Ascending aorta (tissue), 2 donors: ENCODE measurements at regions of chr2 and their contacts with region 1.

Region 1: GRCh38 chr2:191051825-191052778 is 38.1 kb upstream of the STAT1 start:
- DNase-seq: no peak
- H3K4me3 ChIP-seq: no peak overlapping the region
- H3K27ac ChIP-seq: no peak overlapping the region
- H3K4me1 ChIP-seq: peaks cover 0 to 3% of the 10 kb centered on the region in 2 donors
- H3K27me3 ChIP-seq: no peaks in the 10 kb centered on the region
- CTCF ChIP-seq: peak; percentile 44 to 62 (median 60)

Region 2: DNA sequence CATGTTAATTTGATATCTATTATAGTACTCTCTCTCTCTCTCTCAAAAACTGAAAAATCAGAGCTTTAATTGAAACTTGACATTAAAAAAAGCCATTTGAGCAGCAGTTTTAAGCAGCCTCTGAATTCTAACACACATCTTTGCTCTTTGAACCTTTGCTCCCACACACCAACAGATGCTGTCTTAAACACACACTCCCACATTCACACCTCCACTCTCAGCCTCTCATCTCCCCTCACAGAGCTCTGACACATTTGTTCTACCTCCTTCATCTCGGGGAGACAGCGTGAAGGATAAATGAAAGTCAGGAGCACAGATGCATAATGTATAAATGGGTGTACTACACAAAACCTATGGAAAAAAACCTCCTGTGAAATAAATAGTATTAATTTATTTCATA is 308.1 kb before region 1 on chr2:
- intact Hi-C with region 1: no loop called
- DNase-seq: no peak
- H3K4me3 ChIP-seq: no peak overlapping the region
- H3K27ac ChIP-seq: no peak overlapping the region
- H3K4me1 ChIP-seq: no peaks in the 10 kb centered on the region
- H3K27me3 ChIP-seq: no peaks in the 10 kb centered on the region
- CTCF ChIP-seq: no peak

Region 3: GRCh38 chr2:190804182-190804795 is 247.8 kb before region 1 on chr2:
- intact Hi-C with region 1: no loop called
- DNase-seq: no peak
- H3K4me3 ChIP-seq: no peak overlapping the region
- H3K27ac ChIP-seq: no peak overlapping the region
- H3K4me1 ChIP-seq: no peaks in the 10 kb centered on the region
- H3K27me3 ChIP-seq: no peaks in the 10 kb centered on the region
- CTCF ChIP-seq: peak; percentile 30 to 63 (median 52)

Region 4: DNA sequence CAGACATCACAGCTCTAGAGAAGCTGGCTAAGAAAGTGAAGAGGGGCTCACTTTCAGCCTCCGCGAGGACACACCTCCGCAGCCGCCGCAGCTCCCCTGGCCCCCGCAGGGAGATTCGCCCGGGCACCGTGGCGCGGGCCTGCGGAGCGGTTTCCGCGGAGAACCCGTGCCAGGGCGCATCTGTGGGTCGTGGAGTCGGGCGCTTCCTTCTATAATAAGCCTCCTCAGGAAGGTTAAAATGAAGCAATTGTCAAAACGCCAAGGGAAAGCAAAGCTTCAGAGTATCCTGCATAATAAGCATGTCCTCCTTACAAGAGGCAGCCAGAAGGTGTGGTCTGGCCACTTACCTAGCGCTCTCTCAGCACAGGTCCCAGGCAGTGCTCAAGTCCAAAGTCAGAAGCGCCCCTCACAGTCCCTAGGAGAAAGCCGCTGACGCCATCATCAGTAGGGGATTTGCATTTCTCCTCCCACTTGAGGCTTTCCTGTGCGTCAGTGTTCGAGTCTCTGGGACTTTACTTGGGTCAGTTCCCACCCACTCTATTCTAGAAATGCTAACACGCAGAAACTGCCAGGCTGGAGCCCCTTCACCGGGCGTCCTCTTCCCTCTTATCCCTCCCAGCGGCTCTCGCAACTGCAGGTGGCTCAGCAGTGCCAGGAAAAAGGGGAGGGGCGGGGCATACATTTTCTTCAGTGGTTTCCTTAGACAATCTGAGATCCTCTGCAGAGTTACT is 98.7 kb after region 1 on chr2 and contains the start of gene STAT4:
- intact Hi-C with region 1: loop called (anchors 5 kb)
- DNase-seq: peak; percentile 45 to 72
- H3K4me3 ChIP-seq: peak within 1 kb of the TSS; percentile 46 to 68
- H3K27ac ChIP-seq: no peak within 1 kb of the TSS
- H3K4me1 ChIP-seq: no peaks in the 10 kb centered on the region
- H3K27me3 ChIP-seq: no peaks in the 10 kb centered on the region
- CTCF ChIP-seq: no peak
- total RNA-seq, gene STAT4: 0.85 TPM

Region 5: GRCh38 chr2:191521608-191522208 is 469.6 kb after region 1 on chr2:
- intact Hi-C with region 1: loop called (anchors 5 kb)
- DNase-seq: no peak
- H3K4me3 ChIP-seq: no peak overlapping the region
- H3K27ac ChIP-seq: no peak overlapping the region
- H3K4me1 ChIP-seq: no peaks in the 10 kb centered on the region
- H3K27me3 ChIP-seq: no peaks in the 10 kb centered on the region
- CTCF ChIP-seq: peak; percentile 52 to 72 (median 68)